K562 (cell line): ENCODE measurements at regions of chr19 and their contacts with region 1.

Region 1: GRCh38 chr19:18675779-18676178 is 7.7 kb upstream of the CRTC1 start:
- DNase-seq: peak; percentile 44 to 57 (median 56)
- ATAC-seq: peak; percentile 63
- H3K4me3 ChIP-seq: no peak overlapping the region
- H3K27ac ChIP-seq: no peak overlapping the region
- H3K4me1 ChIP-seq: peaks cover 7 to 21% of the 10 kb centered on the region in 2 experiments; a peak in 3 of 5 replicates
- H3K27me3 ChIP-seq: no peaks in the 10 kb centered on the region
- CTCF ChIP-seq: peak; percentile 69 to 73 (median 70)
- EP300 ChIP-seq: no peak
- POLR2A ChIP-seq: no peak
- RAD21 ChIP-seq: peak; percentile 54 to 75

Region 2: DNA sequence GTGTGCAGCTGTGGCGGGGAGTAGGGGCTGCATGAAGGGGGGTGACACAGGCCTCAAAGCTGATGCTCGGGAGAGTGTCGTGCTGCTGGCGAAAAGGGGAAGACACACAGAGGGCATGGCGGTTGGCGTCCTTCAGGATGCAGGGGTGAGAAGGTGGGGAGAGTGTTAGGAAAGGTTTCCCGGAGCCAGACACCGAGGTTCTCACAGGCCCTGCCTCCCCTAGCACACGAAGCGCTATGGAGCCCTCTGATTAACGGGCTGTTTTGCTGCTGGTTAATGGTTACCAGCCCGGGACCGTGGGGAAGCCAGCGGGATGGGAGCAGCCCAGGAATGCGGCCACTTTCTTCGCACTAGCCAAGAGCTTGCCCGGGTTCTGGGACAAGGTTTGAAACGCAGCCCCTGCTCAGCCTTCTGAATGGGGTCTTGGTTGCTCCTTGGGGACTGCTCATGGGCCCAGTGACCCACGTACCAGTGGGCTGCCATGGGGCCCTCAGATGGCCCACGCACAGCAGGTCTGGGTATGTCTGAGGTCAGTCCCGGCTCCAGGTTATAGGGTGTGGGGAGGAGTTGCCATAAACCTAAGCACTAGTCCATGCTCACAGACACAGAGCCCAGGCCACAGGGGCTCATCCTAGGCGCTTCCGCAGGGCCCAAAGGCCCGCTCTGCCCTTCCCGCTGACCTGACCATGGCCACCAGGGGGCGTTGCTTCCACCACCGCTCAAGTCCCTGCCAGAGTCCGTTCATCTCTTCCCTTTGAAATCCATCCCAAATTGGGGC is 206.5 kb before region 1 on chr19:
- CTCF ChIA-PET with region 1: no interaction called
- POLR2A ChIA-PET with region 1: no interaction called
- in situ Hi-C with region 1: loop called (anchors 5 kb)
- intact Hi-C with region 1: loop called (anchors 5 kb)
- DNase-seq: peak; percentile 76 to 85 (median 79)
- ATAC-seq: peak; percentile 93
- H3K4me3 ChIP-seq: no peak overlapping the region
- H3K27ac ChIP-seq: no peak overlapping the region
- H3K4me1 ChIP-seq: peaks cover 6 to 59% of the 10 kb centered on the region in 2 experiments; a peak in 4 of 5 replicates
- H3K27me3 ChIP-seq: no peaks in the 10 kb centered on the region
- CTCF ChIP-seq: peak; percentile 76 to 89 (median 87)
- EP300 ChIP-seq: no peak
- POLR2A ChIP-seq: no peak
- RAD21 ChIP-seq: peak; percentile 39 to 68

Region 3: DNA sequence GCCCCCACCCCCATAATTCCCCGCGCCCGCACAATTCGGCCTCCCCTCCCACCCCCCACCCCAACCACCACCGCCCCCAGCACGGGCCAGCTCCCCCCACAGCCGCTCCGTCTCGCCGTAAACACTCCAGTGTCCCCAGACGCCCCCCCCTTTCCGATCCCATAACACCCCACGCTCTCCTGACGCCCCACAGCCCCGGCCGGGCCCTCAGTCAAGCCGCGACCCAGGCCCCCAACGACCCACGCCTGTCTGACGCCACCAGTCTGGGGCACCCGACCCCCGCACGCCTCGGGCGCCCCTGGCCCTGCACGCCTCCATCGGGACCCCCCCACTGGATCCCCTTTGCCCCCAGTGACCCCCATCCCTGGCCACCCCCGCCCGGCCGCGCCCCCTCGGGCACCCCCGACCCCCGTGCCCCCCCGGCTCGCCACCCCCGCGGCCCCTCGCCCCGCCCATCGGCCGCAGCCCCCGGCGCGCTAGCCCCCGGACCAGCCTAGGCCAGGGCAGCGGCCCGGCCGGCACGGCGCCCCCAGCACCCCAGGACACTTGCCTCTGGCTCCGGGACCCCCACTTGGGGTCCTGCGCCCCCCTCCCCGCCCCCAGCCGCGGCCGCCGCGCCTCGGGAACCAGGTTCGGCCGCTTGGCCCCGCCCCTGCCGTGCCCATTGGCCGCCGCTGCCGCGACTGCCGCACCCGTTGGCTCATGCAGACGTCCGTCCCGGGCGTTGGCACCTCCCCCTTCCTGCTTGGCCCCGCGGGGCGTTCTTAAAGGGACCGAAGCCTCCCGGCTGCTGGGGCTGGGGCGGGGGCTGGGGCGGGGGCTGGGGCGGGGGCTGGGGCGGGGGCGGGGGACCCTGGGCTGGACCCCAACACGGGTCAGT is 132.6 kb before region 1 on chr19 and contains the start of gene FKBP8:
- CTCF ChIA-PET with region 1: no interaction called
- POLR2A ChIA-PET with region 1: no interaction called
- in situ Hi-C with region 1: no loop called
- intact Hi-C with region 1: loop called (anchors 5 kb)
- DNase-seq: peak; percentile 94 to 97 (median 96)
- ATAC-seq: peak; percentile 97
- H3K4me3 ChIP-seq: peak within 1 kb of the TSS; percentile 68
- H3K27ac ChIP-seq: peak within 1 kb of the TSS; percentile 88
- H3K4me1 ChIP-seq: peaks cover 18 to 38% of the 10 kb centered on the region in 2 experiments
- H3K27me3 ChIP-seq: no peaks in the 10 kb centered on the region
- CTCF ChIP-seq: no peak
- EP300 ChIP-seq: no peak
- POLR2A ChIP-seq: no peak
- RAD21 ChIP-seq: no peak
- polyA plus RNA-seq, gene FKBP8: 0.46 to 1.0 TPM

Region 4: DNA sequence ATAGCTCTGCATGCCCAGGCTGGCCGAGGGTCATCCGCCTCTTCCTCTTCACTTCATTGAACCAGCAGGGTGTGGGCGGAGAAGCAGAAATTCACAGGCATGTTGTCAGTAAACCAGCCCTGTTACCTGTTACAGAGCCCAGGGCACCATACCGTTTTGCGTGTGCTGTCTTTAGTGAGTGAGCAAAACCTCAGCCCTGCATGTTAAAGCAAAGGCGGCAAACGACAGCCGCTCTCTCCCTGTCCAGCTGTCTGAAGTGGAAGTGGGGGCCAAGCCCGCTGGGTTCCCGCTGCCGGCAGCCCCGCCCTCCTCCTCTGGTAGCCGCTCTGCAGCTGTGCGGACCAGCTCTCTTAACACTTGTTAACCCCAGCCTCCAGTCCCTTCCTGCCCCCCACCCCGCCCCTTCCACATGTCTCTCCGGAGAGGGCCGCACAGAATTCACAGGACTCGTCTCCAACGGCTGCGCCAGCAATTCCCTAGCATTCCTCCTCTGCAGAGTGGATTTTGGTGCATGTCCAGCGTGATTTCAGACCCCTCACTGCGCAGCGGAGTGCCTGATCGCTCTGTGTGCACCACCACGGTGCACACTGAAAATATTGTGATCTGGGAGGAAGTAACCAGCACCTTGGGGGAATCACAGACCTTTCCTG is 26.3 kb before region 1 on chr19:
- CTCF ChIA-PET with region 1: no interaction called
- POLR2A ChIA-PET with region 1: no interaction called
- in situ Hi-C with region 1: no loop called
- intact Hi-C with region 1: no loop called
- DNase-seq: no peak
- ATAC-seq: peak; percentile 25; the same call in 1 of the 3 replicates
- H3K4me3 ChIP-seq: no peak overlapping the region
- H3K27ac ChIP-seq: no peak overlapping the region
- H3K4me1 ChIP-seq: peaks cover 6 to 51% of the 10 kb centered on the region in 2 experiments; a peak in 3 of 5 replicates
- H3K27me3 ChIP-seq: no peaks in the 10 kb centered on the region
- CTCF ChIP-seq: no peak
- EP300 ChIP-seq: no peak
- POLR2A ChIP-seq: no peak
- RAD21 ChIP-seq: no peak

Region 5: GRCh38 chr19:18710996-18711751 is 35.4 kb after region 1 on chr19:
- CTCF ChIA-PET with region 1: no interaction called
- POLR2A ChIA-PET with region 1: no interaction called
- in situ Hi-C with region 1: no loop called
- intact Hi-C with region 1: no loop called
- DNase-seq: no peak
- ATAC-seq: no peak
- H3K4me3 ChIP-seq: no peak overlapping the region
- H3K27ac ChIP-seq: no peak overlapping the region
- H3K4me1 ChIP-seq: peaks cover 0 to 35% of the 10 kb centered on the region in 2 experiments; a peak in 2 of 5 replicates
- H3K27me3 ChIP-seq: no peaks in the 10 kb centered on the region
- CTCF ChIP-seq: no peak
- EP300 ChIP-seq: no peak
- POLR2A ChIP-seq: no peak
- RAD21 ChIP-seq: no peak